Transverse colon (tissue), 4 donors: ENCODE measurements at regions of chr5 and their contacts with region 1.

Region 1: GRCh38 chr5:80554646-80555045 is 15.4 kb downstream of the ANKRD34B start:
- DNase-seq: no peak
- H3K4me3 ChIP-seq: no peak overlapping the region
- H3K27ac ChIP-seq: no peak overlapping the region
- H3K4me1 ChIP-seq: no peaks in the 10 kb centered on the region
- H3K27me3 ChIP-seq: peaks cover 36% of the 10 kb centered on the region
- CTCF ChIP-seq: no peak
- EP300 ChIP-seq: no peak
- POLR2A ChIP-seq: no peak

Region 2: GRCh38 chr5:80370390-80370789 is 184.3 kb before region 1 on chr5:
- in situ Hi-C with region 1: no loop called
- intact Hi-C with region 1: loop called (anchors 5 kb)
- DNase-seq: no peak
- H3K4me3 ChIP-seq: no peak overlapping the region
- H3K27ac ChIP-seq: no peak overlapping the region
- H3K4me1 ChIP-seq: no peaks in the 10 kb centered on the region
- H3K27me3 ChIP-seq: no peaks in the 10 kb centered on the region
- CTCF ChIP-seq: no peak
- EP300 ChIP-seq: no peak
- POLR2A ChIP-seq: no peak

Region 3: GRCh38 chr5:80399526-80400239 is 155.0 kb before region 1 on chr5:
- in situ Hi-C with region 1: no loop called
- intact Hi-C with region 1: no loop called
- DNase-seq: no peak
- H3K4me3 ChIP-seq: no peak overlapping the region
- H3K27ac ChIP-seq: no peak overlapping the region
- H3K4me1 ChIP-seq: peaks cover 0 to 3% (median 0%) of the 10 kb centered on the region in 4 donors
- H3K27me3 ChIP-seq: no peaks in the 10 kb centered on the region
- CTCF ChIP-seq: no peak
- EP300 ChIP-seq: no peak
- POLR2A ChIP-seq: no peak